Activated naive CD4-positive, alpha-beta T cell treated with anti-CD3 and anti-CD28 coated beads for 36 hours (primary cell): ENCODE measurements at regions of chr10 and their contacts with region 1.

Region 1: GRCh38 chr10:11515596-11516430 is 95.6 kb downstream of the USP6NL start:
- DNase-seq: peak; percentile 73
- H3K4me3 Mint-ChIP-seq: peak overlapping the region; percentile 10
- H3K27ac Mint-ChIP-seq: peak overlapping the region; percentile 25
- H3K4me1 Mint-ChIP-seq: peaks cover 21% of the 10 kb centered on the region
- H3K27me3 Mint-ChIP-seq: no peaks in the 10 kb centered on the region

Region 2: GRCh38 chr10:11145495-11145855 is 370.3 kb before region 1 on chr10:
- CTCF ChIA-PET with region 1: no interaction called
- intact Hi-C with region 1: no loop called
- DNase-seq: peak; percentile 81
- H3K4me3 Mint-ChIP-seq: peak overlapping the region; percentile 76
- H3K27ac Mint-ChIP-seq: peak overlapping the region; percentile 94
- H3K4me1 Mint-ChIP-seq: peaks cover 83% of the 10 kb centered on the region
- H3K27me3 Mint-ChIP-seq: no peaks in the 10 kb centered on the region

Region 3: DNA sequence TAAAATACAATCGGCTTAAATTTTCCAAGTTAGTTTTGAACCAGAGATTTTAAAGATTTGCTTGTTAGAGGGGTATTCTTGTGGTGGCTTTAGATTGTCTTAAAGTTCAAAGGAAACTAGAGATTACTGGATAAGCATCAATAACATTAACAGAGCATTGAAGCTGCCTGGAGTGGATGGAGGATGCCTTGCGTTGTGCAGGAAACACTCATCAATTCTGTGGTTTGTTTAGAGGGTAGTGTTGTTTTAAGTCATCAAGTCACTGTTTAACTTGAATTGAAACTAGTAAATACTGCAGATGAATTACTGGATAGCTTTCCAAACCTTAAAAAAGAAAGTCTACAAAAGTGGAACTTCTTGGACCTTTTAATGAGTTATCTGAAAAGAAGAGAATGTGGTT is 279.6 kb before region 1 on chr10:
- CTCF ChIA-PET with region 1: no interaction called
- intact Hi-C with region 1: loop called (anchors 5 kb)
- DNase-seq: peak; percentile 61
- H3K4me3 Mint-ChIP-seq: peak overlapping the region; percentile 26
- H3K27ac Mint-ChIP-seq: peak overlapping the region; percentile 93
- H3K4me1 Mint-ChIP-seq: peaks cover 92% of the 10 kb centered on the region
- H3K27me3 Mint-ChIP-seq: no peaks in the 10 kb centered on the region

Region 4: DNA sequence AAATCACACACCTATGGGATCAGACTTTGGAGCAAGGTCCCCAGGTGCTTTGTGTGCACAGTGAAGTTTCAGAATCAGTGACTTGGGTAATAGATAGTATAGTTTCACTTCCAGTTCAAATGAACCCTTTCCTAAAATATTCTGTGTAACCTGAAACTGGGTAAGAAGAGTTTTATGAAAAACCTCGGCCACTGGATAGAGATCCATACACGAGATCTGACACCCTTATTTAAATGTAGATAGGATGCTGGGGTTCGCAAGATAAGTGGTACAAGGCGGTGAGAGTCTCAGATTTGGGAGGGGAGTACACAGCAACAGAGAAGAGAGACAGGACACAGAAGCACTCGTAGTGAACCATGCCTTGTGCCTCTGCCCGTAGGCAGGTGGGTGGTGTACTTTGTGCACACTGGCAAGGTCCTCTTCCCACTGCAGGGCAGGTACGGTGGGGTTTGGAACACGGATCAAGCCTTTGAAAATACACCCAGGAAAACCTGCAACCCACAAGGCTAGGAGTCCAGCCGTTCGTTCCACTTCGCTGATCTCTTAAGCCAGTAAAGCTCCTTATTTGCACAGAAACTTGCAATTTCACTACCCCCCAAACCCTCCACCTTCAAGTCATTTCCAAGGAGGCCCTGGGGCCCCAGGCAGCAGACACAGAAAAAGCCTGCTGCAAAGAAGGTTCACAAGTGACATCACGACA is 67.1 kb before region 1 on chr10:
- CTCF ChIA-PET with region 1: no interaction called
- intact Hi-C with region 1: no loop called
- DNase-seq: no peak
- H3K4me3 Mint-ChIP-seq: no peak overlapping the region
- H3K27ac Mint-ChIP-seq: no peak overlapping the region
- H3K4me1 Mint-ChIP-seq: peaks cover 17% of the 10 kb centered on the region
- H3K27me3 Mint-ChIP-seq: no peaks in the 10 kb centered on the region

Region 5: DNA sequence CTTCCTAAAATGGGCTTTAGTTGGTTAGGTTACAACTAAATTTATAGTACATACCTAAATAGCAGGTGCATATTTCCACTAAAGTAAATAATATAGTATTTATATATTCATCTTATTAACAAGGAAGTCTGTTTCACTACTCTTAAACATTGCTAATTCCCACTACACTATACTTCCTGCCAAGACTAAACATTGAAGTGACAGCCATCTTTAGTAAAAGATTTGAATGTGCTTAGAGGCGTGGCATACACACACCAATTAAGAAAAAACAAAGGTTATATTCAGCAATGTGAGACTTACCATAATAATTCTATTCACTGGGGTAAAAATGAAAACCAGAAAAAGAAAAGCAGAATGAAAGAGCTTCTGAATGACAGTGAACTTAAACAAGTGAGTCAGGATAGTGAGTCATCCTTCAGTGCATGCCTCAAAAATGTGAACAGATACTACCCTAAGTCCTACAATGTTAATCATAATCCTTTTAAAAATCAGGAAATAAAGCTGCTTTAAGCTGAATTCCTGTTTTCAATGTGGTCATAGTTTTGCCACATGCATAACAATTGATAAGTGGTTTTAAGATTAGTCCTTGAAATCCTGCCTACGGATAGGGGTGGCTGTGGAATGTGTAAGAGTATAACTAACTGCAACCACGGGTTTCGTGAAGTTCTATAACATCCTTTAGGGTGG is 36.2 kb after region 1 on chr10:
- CTCF ChIA-PET with region 1: interaction called, 6 read pairs
- intact Hi-C with region 1: loop called (anchors 1 kb)
- DNase-seq: no peak
- H3K4me3 Mint-ChIP-seq: no peak overlapping the region
- H3K27ac Mint-ChIP-seq: peak overlapping the region; percentile 68
- H3K4me1 Mint-ChIP-seq: peaks cover 39% of the 10 kb centered on the region
- H3K27me3 Mint-ChIP-seq: no peaks in the 10 kb centered on the region

Region 6: GRCh38 chr10:11631890-11632587 is 116.2 kb after region 1 on chr10:
- CTCF ChIA-PET with region 1: no interaction called
- intact Hi-C with region 1: loop called (anchors 1 kb)
- DNase-seq: peak; percentile 76
- H3K4me3 Mint-ChIP-seq: no peak overlapping the region
- H3K27ac Mint-ChIP-seq: no peak overlapping the region
- H3K4me1 Mint-ChIP-seq: peaks cover 13% of the 10 kb centered on the region
- H3K27me3 Mint-ChIP-seq: no peaks in the 10 kb centered on the region

Region 7: DNA sequence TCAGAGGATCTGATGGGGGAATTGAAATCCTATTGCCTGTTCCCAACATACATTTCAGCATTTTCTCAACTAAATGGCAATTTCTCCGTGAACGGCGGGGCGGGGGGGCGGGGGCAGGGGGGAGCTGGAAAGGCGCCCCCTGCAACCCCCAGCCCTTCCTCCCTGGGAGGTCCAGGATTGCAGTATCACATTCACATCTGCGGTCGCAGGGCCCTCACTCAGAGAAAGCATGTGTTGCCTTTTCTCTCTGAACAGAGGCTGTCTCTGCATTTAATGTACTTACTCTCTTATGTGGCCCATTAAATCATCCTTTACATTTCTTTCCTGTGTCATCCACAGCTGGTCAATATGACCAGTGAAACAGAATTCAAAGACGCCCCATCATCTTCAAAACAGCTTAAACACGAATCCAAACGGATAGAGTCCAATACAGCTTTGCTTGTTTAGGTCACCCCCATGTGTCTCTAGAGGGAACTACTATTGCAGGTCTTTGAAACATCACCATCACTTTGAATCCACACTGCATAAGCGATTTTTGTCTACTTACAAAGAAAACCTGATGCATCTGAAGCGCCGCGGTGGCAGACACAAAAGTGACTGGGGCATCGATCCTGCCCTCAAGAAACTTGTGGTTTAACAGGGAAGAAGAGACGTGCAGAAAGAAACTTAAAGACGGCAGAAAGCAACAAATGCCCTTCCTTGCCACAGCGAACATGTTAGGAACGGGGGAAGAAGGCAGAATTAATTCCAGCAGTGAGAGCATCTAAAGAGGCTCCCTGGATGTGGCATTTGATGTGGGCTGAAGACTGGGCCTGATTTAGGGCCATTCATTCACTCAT is 209.3 kb after region 1 on chr10:
- CTCF ChIA-PET with region 1: interaction called, 18 read pairs
- intact Hi-C with region 1: loop called (anchors 1 kb)
- DNase-seq: peak; percentile 26
- H3K4me3 Mint-ChIP-seq: no peak overlapping the region
- H3K27ac Mint-ChIP-seq: no peak overlapping the region
- H3K4me1 Mint-ChIP-seq: peaks cover 5% of the 10 kb centered on the region
- H3K27me3 Mint-ChIP-seq: peaks cover 2% of the 10 kb centered on the region

Region 8: DNA sequence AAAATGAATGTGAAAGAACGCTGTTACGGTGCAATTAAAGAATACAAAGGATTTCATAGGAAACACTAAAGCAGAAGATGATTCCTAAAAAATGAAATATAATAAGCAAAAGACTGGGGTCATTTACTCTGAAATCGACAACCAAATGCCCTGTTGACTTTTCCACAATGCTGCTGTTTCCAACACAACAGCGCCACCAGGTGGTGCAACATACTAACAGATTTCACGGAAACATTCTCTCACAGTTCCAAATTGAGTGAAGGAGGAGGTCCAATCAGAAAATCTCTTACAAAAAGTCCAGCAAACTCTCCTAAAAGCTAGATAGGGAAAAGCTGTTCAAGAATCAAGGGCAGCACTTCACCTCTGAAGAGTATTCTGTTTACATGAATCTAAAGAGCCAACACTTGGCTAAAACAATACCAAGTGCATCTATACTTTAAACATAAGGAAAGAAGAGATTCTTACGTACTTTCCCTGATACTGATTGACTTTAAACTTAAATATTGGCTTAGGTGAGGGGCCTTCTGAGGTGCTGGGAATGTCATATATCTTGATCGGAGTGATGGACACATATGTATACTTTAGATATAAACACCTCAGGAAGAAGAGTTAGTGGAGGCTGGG is 470.9 kb after region 1 on chr10:
- CTCF ChIA-PET with region 1: no interaction called
- intact Hi-C with region 1: loop called (anchors 1 kb)
- DNase-seq: peak; percentile 88
- H3K4me3 Mint-ChIP-seq: no peak overlapping the region
- H3K27ac Mint-ChIP-seq: no peak overlapping the region
- H3K4me1 Mint-ChIP-seq: peaks cover 5% of the 10 kb centered on the region
- H3K27me3 Mint-ChIP-seq: no peaks in the 10 kb centered on the region